PC-3 (cell line): ENCODE measurements at regions of chr18 and their contacts with region 1.

Region 1: DNA sequence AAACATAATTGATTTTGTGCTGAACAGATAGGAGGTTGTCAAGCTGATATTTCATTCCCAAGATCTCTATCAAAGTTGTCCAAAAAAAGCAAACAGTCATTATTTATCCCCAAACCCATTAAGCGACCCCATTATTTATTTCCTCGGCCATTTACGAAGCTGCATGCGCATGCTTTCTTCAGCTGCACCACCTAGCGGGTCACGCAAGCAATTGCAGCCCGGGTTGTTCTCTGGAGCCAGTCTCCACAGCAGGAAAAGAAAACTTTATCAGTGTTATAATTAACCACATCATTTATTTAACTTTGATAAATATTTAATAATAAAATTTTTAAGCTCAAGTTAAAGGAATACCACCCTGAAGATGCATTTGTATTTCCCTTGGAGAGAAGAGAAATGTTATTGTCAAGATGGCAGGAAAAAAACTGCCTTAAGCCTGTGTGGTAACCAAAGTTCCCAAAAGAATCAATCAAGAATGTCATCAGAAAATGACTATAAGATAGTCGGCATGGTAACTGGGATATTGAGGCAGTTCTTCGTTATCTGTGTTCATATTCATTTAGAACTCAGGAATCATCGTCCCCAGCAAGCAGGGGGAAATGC is 304.7 kb downstream of the FBXO15 start:
- DNase-seq: peak; percentile 71
- ATAC-seq: peak; percentile 64
- H3K4me3 ChIP-seq: peak overlapping the region; percentile 55; the same call in 1 of the 2 replicates
- H3K27ac ChIP-seq: no peak overlapping the region
- H3K4me1 ChIP-seq: peaks cover 9% of the 10 kb centered on the region
- H3K27me3 ChIP-seq: no peaks in the 10 kb centered on the region
- CTCF ChIP-seq: peak; percentile 90

Region 2: DNA sequence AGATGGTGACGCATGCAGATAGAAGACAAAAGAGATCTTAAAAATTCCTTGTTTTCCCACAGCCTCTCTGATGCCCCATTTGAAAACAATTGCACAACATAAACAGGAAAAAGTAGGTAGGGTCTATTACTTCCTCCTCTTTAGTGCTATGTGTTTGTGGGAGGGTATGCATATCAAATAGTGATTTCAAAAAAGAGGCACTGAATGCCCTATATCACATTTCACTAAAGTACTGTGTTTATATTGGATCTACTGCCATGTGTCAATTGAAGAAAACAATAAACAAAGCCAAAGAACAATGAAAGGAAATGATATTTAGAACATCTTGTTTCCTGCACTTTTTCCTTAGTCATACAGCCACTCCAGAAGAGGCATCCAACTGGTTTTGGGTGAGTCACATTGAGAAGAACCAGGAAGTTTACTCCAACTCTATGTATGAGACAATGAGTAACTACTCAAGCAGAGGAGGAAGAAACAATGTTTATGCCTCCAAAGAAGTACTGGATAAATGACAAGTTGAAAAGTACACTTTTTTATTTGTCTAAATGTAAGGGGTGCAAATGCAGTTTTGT is 278.9 kb before region 1 on chr18:
- CTCF ChIA-PET with region 1: no interaction called
- POLR2A ChIA-PET with region 1: no interaction called
- intact Hi-C with region 1: loop called (anchors 10 kb)
- DNase-seq: peak; percentile 95
- ATAC-seq: peak; percentile 96
- H3K4me3 ChIP-seq: no peak overlapping the region
- H3K27ac ChIP-seq: peak overlapping the region; percentile 84
- H3K4me1 ChIP-seq: peaks cover 19% of the 10 kb centered on the region
- H3K27me3 ChIP-seq: no peaks in the 10 kb centered on the region
- CTCF ChIP-seq: no peak

Region 3: DNA sequence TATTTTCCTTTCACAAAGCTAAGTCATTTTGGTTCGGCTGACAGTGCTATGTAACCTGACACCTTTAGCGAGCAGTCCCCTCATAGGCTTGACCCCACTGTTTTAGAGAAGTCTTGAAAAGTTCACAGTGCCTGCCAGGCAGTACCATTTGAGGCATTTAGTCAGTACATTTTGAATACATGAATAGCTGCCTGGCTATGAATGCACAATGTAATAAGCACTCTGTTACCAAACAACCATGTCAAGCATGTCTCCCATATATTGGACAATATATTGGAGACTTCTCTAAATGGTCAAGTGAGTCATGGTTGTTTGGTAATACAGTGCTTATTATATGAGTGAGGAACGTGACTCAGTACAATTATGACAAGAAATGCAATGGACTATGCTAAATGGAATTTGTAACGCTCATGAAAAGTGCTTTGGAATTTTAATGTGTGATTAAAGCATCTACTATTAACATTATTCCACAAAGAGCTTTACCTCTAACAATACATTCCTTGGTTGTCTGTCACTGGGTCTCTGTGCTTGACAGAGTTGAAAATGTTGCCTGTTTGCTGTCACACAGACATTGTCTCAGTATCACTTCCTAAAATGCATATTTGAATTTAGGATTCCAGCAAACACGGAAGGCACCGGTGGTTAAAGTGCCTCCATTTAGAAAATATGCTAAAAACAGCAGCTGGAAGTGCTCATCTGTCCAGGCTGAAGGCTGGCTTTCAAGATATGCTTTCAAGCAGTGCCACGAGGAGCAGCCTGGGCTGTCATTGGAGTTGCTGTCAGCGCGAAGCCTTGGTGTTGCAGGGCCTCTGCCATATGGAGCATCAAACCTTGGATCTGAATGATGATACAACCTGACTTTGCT is 153.8 kb before region 1 on chr18:
- CTCF ChIA-PET with region 1: no interaction called
- POLR2A ChIA-PET with region 1: no interaction called
- intact Hi-C with region 1: loop called (anchors 10 kb)
- DNase-seq: peak; percentile 87
- ATAC-seq: peak; percentile 41
- H3K4me3 ChIP-seq: no peak overlapping the region
- H3K27ac ChIP-seq: peak overlapping the region; percentile 93
- H3K4me1 ChIP-seq: peaks cover 49% of the 10 kb centered on the region
- H3K27me3 ChIP-seq: no peaks in the 10 kb centered on the region
- CTCF ChIP-seq: no peak

Region 4: GRCh38 chr18:73774811-73775509 is 67.9 kb before region 1 on chr18:
- CTCF ChIA-PET with region 1: no interaction called
- POLR2A ChIA-PET with region 1: no interaction called
- intact Hi-C with region 1: loop called (anchors 2 kb)
- DNase-seq: peak; percentile 80
- ATAC-seq: peak; percentile 99
- H3K4me3 ChIP-seq: peak overlapping the region; percentile 56
- H3K27ac ChIP-seq: no peak overlapping the region
- H3K4me1 ChIP-seq: peaks cover 14% of the 10 kb centered on the region
- H3K27me3 ChIP-seq: no peaks in the 10 kb centered on the region
- CTCF ChIP-seq: peak; percentile 68